ENCODE measurements at regions of chr7 and their contacts with region 1.

Region 1: DNA sequence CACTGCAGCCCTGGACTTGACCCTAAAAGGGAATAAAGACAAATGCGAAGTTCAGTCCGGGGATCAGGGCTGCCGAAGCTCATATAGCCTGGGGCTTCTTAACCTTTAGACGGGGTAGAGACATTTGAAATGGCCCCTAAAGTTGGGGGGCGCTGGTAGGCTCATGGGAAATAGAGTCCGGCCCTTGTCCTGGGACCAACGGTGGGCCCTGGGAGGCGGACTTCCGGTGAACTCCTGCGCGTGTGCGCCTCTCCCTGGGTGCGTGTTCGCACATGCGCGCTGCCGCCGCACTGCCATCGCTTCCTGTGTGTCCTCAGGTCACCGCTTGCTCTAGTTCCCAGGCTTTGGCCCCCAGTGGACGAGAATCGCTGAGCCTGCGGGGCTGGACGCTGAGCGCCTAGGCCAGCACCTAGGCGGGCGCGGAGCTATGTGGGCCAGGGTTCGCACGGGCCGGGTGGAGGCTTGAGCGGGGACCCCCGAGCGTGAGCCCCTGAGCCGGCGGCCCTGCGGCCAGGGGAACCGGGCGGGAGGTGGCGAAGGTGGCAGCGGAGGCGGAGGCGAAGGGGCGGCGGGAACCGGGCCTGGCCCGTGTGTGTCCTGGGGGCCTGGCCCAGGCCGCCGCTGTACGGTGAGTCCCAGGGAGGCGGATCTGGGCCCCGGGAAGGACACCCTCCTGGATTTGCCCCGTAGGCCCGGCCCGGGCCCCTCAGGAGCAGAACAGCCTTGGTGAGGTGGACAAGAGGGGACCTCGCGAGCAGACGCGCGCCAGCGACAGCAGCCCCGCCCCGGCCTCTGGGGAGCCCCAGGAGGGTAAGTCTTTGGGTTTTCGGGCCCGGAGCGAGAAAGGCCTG is 23.0 kb upstream of the ZNF12 start:
- DNase-seq: peak; percentile 94 to 98 (median 97)
- ATAC-seq: peak; percentile 100
- H3K4me3 ChIP-seq: peak overlapping the region; percentile 64 to 95 (median 84)
- H3K27ac ChIP-seq: peak overlapping the region; percentile 59 to 93 (median 88)
- H3K4me1 ChIP-seq: peaks cover 0 to 20% (median 9%) of the 10 kb centered on the region in 12 donors
- H3K27me3 ChIP-seq: no peaks in the 10 kb centered on the region
- CTCF ChIP-seq: peak in 1 of 12 donors; percentile 21
- POLR2A ChIP-seq: peak; percentile 0 to 44

Region 2: GRCh38 chr7:6130007-6130587 is 599.6 kb before region 1 on chr7:
- intact Hi-C with region 1: no loop called
- DNase-seq: no peak
- ATAC-seq: no peak
- H3K4me3 ChIP-seq: no peak overlapping the region
- H3K27ac ChIP-seq: no peak overlapping the region
- H3K4me1 ChIP-seq: no peaks in the 10 kb centered on the region
- H3K27me3 ChIP-seq: no peaks in the 10 kb centered on the region
- CTCF ChIP-seq: no peak
- POLR2A ChIP-seq: no peak

Region 3: GRCh38 chr7:6637544-6638229 is 92.0 kb before region 1 on chr7:
- intact Hi-C with region 1: loop called in 1 of 10 experiments (anchors 5 kb)
- DNase-seq: peak in 3 of 5 donors; percentile 30 to 44 (median 37)
- ATAC-seq: peak; percentile 10 to 56 (median 42)
- H3K4me3 ChIP-seq: peak overlapping the region; percentile 66 to 99 (median 92)
- H3K27ac ChIP-seq: peak overlapping the region in 11 of 12 donors; percentile 41 to 76 (median 63)
- H3K4me1 ChIP-seq: peaks cover 0 to 31% (median 17%) of the 10 kb centered on the region in 12 donors
- H3K27me3 ChIP-seq: no peaks in the 10 kb centered on the region
- CTCF ChIP-seq: peak in 9 of 12 donors; percentile 8 to 42 (median 24)
- POLR2A ChIP-seq: no peak

Region 4: GRCh38 chr7:7136423-7136822 is 406.7 kb after region 1 on chr7:
- intact Hi-C with region 1: no loop called
- DNase-seq: no peak
- ATAC-seq: peak; percentile 64 to 87 (median 74)
- H3K4me3 ChIP-seq: peak overlapping the region in 2 of 12 donors; percentile 2 to 6
- H3K27ac ChIP-seq: peak overlapping the region in 10 of 12 donors; percentile 5 to 64 (median 39)
- H3K4me1 ChIP-seq: peaks cover 0 to 15% (median 0%) of the 10 kb centered on the region in 12 donors
- H3K27me3 ChIP-seq: no peaks in the 10 kb centered on the region
- CTCF ChIP-seq: no peak
- POLR2A ChIP-seq: no peak